GM10248 (cell line): ENCODE measurements at regions of chr2 and their contacts with region 1.

Region 1: DNA sequence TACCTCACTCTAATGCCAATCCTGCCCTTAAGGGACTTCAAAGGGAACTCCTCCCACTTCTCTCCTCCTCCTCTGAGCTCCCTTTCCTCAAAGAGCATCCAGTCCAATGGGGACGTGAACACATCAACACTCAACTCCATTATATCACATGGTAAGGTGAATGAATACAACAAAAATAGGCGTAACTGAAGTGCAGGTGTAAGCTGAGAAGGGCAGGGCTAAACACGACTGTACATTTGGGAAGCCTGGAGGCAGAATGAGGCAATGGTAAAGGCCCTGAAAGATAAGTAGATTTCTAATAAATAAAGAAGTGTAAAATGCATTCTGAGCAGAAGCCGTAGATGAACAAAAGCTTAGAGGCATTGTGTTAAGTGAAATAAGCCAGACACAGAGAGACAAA is 226.1 kb upstream of the TRIB2 start:
- DNase-seq: no peak
- CTCF ChIP-seq: no peak

Region 2: DNA sequence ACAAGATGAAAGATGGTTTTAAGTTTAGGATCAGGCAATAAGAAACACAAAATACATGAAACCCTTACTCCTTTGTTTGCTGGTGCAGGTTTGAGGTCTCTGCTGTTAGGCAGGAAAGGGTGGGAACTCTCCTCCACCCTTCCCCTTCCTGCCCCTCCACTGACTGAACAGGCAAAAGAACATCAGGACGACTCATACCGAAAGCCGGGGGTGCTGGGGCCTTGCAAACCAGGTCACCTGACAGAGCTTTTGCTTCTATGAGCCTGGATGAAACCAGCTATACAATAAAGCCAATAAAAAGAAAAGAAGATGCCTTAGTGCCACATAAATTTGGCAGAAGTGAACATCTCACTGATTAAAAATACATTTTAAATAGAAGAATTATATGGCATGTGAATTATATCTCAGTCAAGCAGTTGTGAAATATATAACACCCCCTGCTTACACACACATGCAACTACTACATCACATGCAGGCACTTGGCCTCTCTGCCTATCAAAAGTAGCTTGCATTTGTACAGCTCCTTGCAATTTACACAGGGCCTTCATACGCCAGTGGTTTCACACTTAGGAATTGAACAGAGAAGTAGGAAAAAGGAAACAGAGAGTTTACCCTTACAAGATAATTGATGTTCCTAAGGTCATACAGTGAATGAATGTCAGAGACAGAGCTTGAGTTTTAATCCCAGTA is 11.0 kb after region 1 on chr2:
- CTCF ChIA-PET with region 1: interaction called, 13 read pairs
- POLR2A ChIA-PET with region 1: no interaction called
- DNase-seq: peak; percentile 56
- CTCF ChIP-seq: no peak